Right cardiac atrium (tissue), 5 donors: ENCODE measurements at regions of chrX and their contacts with region 1.

Region 1: GRCh38 chrX:71178908-71179307 is 34.3 kb downstream of the NLGN3 start:
- DNase-seq: peak in 1 of 3 donors; percentile 70
- ATAC-seq: peak; percentile 31 to 35
- H3K4me3 ChIP-seq: no peak overlapping the region
- H3K27ac ChIP-seq: no peak overlapping the region
- H3K4me1 ChIP-seq: no peaks in the 10 kb centered on the region
- H3K27me3 ChIP-seq: no peaks in the 10 kb centered on the region

Region 2: DNA sequence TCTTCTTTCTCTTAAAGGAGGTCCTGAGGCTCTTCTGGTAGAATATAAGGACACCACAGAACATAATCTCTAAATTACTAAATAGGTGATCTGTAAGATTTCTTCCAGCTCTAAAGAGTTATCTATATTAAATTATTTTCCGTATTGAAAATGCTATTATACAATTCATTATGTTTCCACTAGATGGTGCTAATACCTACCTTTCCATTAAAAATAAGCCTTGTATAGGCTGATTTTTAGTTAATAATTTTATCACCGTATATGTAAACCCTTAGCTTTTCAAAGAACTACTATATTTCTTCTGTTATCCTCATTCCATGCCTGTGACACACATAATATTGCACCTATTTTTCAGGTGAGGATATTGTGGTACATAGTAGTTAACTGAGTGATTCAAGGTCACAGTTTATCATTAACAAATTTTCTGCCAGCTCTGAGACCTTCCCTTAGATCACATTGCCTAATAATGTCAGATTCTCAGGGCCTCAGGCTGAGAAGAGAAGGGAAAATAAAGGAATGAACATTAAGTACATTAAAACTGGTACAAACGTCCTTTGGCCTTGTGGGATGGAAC is 409.2 kb before region 1 on chrX:
- intact Hi-C with region 1: loop called in 1 of 4 experiments (anchors 10 kb)
- DNase-seq: no peak
- ATAC-seq: no peak
- H3K4me3 ChIP-seq: no peak overlapping the region
- H3K27ac ChIP-seq: no peak overlapping the region
- H3K4me1 ChIP-seq: no peaks in the 10 kb centered on the region
- H3K27me3 ChIP-seq: no peaks in the 10 kb centered on the region

Region 3: GRCh38 chrX:70998411-70999027 is 180.4 kb before region 1 on chrX:
- intact Hi-C with region 1: loop called in 1 of 4 experiments (anchors 10 kb)
- DNase-seq: no peak
- ATAC-seq: no peak
- H3K4me3 ChIP-seq: no peak overlapping the region
- H3K27ac ChIP-seq: no peak overlapping the region
- H3K4me1 ChIP-seq: no peaks in the 10 kb centered on the region
- H3K27me3 ChIP-seq: no peaks in the 10 kb centered on the region

Region 4: GRCh38 chrX:71095543-71095911 is 83.4 kb before region 1 on chrX and contains the start of gene FOXO4:
- intact Hi-C with region 1: loop called in 2 of 4 experiments (anchors 10 kb)
- DNase-seq: peak; percentile 92 to 97 (median 96)
- ATAC-seq: peak; percentile 97
- H3K4me3 ChIP-seq: peak within 1 kb of the TSS; percentile 91
- H3K27ac ChIP-seq: peak within 1 kb of the TSS; percentile 42
- H3K4me1 ChIP-seq: peaks cover 5% of the 10 kb centered on the region
- H3K27me3 ChIP-seq: no peaks in the 10 kb centered on the region
- total RNA-seq, gene FOXO4: 32.9 to 59.2 (median 37.1) TPM

Region 5: DNA sequence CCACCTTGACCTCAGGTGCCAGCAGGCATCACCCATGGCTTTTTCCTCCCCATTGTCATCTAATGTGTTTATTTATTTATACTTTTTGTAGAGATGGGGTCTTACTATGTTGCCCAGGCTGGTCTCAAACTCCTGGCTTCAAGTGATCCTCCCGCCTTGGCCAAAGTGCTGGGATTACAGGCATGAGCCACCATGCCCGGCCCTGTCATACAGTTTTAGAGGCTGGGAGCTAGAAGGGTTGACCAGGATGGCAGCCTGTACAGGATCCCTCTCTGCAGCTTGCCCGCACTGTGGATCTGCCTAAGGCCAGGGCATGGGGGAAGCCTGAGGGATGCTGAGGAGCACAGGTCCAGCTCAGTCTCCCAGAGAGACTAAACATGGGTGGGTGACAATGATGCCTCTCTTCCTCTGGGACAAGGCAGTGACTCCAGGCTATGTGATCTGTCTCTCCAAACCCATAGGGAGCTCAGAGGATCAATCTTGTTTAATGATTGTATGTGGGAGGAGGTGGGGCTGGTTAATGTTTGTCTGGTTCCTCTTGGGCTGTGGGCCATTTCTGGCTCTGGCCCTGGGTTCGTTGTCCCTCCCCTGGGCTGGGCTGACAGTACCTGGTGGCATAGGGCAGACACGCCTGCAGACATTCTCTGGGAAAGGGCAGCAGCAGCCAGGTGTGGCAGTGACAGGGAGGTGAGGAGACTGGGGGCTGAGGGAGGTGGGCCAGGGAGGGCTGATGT is 35.9 kb after region 1 on chrX:
- intact Hi-C with region 1: no loop called
- DNase-seq: no peak
- ATAC-seq: no peak
- H3K4me3 ChIP-seq: no peak overlapping the region
- H3K27ac ChIP-seq: no peak overlapping the region
- H3K4me1 ChIP-seq: no peaks in the 10 kb centered on the region
- H3K27me3 ChIP-seq: no peaks in the 10 kb centered on the region